Activated CD4-positive, alpha-beta memory T cell treated with anti-CD3 and anti-CD28 coated beads, Interleukin-2, amount 10 ng/mL, durations not matched to agents 7 days and 5 days (primary cell): ENCODE measurements at regions of chr11 and their contacts with region 1.

Region 1: GRCh38 chr11:76152086-76152681 is 54.1 kb downstream of the WNT11 start:
- DNase-seq: peak; percentile 85
- H3K4me3 Mint-ChIP-seq: peak overlapping the region; percentile 59
- H3K27ac Mint-ChIP-seq: no peak overlapping the region
- H3K4me1 Mint-ChIP-seq: peaks cover 26% of the 10 kb centered on the region
- H3K27me3 Mint-ChIP-seq: peaks cover 37% of the 10 kb centered on the region

Region 2: DNA sequence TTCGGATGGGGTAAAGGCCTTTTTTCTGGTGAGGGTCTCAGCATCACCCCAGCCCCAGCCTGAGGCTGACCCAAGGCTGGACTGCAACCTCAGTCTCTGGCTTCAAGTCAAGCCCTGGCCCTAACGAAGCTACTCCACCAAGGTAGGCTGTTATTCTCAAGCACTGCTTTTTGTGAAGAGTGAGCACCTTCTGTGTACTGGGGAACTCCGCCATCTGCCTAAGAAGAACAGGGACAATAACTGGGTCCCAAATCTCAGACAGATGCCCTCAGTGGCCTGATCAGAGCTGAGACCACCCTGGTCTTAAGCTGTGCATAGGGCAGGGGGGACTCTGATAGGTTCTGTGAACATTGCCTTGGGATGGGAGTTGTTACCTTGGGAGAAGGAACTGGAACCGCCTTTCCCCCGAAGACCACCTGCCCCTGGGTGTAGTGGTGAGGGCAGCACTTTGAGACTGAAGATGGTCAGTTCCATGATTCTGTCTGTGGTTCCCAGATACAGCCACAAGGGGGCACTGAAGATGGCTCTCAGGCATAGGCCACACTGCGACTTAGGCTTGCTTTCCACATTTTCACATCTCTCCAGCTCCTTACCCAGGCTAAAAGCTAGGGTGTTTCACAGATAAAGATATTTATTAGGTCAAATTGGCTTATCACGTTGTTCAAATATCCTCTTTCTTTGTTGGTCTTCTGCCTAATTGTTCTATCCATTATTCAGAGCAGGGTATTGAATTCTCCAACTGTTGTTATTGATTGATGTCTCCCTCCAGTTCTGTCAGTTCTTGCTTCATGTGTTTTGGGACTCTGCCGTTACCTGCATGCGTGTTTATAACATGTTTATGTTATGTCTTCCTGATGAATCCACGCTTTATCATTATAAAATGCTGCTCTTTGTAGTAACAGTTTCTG is 349.0 kb before region 1 on chr11:
- CTCF ChIA-PET with region 1: interaction called, 12 read pairs
- POLR2A ChIA-PET with region 1: no interaction called
- DNase-seq: peak; percentile 76
- H3K4me3 Mint-ChIP-seq: no peak overlapping the region
- H3K27ac Mint-ChIP-seq: no peak overlapping the region
- H3K4me1 Mint-ChIP-seq: peaks cover 20% of the 10 kb centered on the region
- H3K27me3 Mint-ChIP-seq: peaks cover 2% of the 10 kb centered on the region

Region 3: DNA sequence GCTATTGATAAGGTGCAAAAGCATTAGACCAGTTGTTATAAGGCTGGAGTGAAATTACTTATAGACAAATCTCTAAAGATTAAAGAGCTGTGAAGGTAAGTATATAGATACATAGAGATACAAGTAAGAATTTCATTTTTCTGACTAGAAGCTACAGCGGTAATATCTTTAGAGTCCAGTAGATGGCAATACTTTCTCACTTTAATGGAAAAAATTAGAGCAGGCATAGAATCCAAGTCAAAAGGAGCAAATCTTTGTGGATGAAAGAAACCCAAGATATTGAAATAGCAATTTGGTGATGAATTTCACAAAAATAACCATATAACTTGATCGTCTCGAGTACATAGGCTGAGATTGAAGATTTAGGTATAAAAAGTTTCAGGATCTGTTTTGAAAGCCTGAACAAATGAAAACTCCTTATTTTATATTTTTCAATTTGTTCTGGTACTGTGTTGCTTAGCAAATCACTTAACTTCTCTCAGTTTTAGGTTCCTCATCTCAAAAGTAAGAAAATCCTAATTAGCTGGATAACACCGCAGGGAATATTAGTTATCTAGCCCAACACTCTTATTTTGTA is 255.3 kb before region 1 on chr11:
- CTCF ChIA-PET with region 1: interaction called, 106 read pairs
- POLR2A ChIA-PET with region 1: interaction called, 4 read pairs
- DNase-seq: no peak
- H3K4me3 Mint-ChIP-seq: no peak overlapping the region
- H3K27ac Mint-ChIP-seq: no peak overlapping the region
- H3K4me1 Mint-ChIP-seq: no peaks in the 10 kb centered on the region
- H3K27me3 Mint-ChIP-seq: no peaks in the 10 kb centered on the region

Region 4: DNA sequence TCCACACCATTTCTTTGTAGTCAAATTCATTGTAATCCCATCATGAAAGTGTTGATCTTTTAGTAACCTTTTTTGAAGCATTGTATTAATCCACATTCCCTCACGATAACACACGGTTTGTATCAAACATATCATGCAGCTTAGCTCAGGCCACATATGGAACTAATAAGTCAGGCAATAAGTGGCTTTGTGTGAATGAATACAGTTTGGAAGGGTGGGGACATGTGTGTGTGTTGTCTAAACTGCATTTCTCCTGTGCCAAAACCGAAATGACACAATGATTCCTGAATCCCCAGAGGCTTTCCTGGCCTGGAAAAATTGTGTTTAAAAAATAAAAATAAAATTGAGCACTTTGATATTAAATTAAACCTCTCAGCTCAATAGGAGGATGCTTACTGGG is 44.2 kb before region 1 on chr11:
- CTCF ChIA-PET with region 1: interaction called, 10 read pairs
- POLR2A ChIA-PET with region 1: no interaction called
- DNase-seq: no peak
- H3K4me3 Mint-ChIP-seq: no peak overlapping the region
- H3K27ac Mint-ChIP-seq: no peak overlapping the region
- H3K4me1 Mint-ChIP-seq: no peaks in the 10 kb centered on the region
- H3K27me3 Mint-ChIP-seq: no peaks in the 10 kb centered on the region

Region 5: DNA sequence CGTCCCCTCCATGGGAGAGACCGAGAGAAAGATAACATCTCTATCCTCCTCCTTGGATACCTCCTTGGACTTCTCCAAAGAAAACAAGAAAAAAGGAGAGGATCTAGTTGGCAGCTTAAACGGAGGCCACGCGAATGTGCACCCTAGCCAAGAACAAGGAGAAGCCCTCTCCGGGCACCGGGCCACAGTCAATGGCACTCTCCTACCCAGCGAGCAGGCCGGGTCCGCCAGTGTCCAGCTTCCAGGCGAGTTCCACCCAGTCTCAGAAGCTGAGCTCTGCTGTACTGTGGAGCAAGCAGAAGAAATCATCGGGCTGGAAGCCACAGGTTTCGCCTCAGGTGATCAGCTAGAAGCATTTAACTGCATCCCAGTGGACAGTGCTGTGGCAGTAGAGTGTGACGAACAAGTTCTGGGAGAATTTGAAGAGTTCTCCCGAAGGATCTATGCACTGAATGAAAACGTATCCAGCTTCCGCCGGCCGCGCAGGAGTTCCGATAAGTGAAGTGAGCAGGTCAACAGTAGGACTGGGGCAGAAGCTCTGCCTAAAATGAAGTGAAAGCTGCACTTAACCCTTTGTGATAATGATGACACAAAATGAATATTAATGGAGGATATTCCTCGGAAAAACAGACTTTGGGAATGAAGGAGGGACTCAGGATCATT is 11.1 kb before region 1 on chr11:
- CTCF ChIA-PET with region 1: interaction called, 20 read pairs
- POLR2A ChIA-PET with region 1: interaction called, 3 read pairs
- DNase-seq: no peak
- H3K4me3 Mint-ChIP-seq: no peak overlapping the region
- H3K27ac Mint-ChIP-seq: no peak overlapping the region
- H3K4me1 Mint-ChIP-seq: no peaks in the 10 kb centered on the region
- H3K27me3 Mint-ChIP-seq: no peaks in the 10 kb centered on the region